Cardiac septum (tissue), 1 donor: ENCODE measurements at regions of chr1 and their contacts with region 1.

Region 1: DNA sequence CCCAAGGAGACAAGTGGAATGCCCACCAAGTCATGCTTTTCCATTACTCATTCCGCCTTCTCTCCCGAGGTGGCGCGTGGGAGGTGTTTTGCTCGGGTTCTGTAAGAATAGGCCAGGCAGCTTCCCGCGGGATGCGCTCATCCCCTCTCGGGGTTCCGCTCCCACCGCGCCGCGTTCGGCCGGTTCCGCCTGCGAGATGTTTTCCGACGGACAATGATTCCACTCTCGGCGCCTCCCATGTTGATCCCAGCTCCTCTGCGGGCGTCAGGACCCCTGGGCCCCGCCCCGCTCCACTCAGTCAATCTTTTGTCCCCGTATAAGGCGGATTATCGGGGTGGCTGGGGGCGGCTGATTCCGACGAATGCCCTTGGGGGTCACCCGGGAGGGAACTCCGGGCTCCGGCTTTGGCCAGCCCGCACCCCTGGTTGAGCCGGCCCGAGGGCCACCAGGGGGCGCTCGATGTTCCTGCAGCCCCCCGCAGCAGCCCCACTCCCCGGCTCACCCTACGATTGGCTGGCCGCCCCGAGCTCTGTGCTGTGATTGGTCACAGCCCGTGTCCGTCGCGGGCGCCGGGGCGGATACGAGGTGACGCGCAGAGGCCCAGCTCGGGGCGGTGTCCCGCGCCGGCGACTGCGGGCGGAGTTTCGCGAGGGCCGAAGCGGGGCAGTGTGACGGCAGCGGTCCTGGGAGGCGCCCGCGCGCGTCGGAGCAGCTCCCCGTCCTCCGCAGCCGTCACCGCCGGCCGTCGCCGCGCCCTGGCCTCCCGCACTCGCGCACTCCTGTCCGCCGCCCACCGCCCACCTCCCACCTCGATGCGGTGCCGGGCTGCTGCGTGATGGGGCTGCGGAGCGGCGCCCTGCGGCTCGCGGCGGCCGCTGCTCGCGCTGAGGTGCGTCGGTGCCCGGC is at the start of gene KIF1B:
- DNase-seq: peak; percentile 99
- total RNA-seq, gene KIF1B: 93.6 TPM

Region 2: GRCh38 chr1:9890224-9890731 is 319.9 kb before region 1 on chr1:
- intact Hi-C with region 1: no loop called
- DNase-seq: no peak

Region 3: DNA sequence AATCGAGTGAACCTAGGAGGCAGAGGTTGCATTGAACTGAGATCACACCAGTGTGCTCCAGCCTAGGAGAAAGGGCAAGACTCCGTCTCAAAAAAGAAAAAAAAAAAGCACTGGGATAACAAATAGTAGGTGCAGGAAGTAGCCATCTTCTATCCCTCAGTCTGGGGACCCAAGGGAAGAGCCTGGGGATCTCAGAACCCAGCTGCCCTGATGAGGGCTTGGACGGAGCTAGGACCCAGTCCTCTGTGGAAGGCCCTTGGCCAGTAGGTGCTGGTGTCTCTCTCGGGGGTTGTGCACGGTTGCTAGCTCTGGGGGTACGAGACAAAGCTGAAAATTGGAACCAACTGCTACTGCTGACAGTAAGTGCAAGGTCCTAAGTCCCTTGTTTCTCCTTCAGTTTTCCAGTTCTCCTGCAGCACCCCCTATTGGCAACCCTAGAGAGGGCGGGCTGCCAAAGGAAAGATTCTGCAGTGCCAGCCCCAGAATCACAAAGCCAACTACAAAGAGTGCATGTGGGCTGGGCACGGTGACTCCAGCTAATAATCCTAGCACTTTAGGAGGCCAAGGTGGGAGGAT is 57.4 kb before region 1 on chr1:
- intact Hi-C with region 1: loop called (anchors 5 kb)
- DNase-seq: no peak

Region 4: GRCh38 chr1:10195570-10195969 is 14.6 kb before region 1 on chr1:
- intact Hi-C with region 1: no loop called
- DNase-seq: no peak

Region 5: DNA sequence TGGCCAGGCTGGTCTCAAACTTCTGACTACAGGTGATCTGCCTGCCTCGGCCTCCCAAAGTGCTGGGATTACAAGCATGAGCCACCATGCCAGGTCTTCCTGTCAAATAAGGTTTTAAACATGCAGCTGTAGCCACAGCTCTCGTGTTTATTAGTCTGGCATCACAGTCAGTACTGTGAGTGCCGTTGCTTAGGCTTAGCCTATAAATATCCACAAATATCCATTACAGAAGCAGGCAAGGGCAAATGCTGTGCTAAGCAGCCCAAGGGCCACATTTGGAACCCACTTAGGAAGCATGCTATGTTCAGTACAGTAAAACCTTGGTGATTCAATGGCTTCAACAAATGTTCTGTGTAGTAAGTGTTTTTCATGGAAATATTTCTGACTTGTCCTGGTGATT is 76.1 kb after region 1 on chr1:
- intact Hi-C with region 1: loop called (anchors 2 kb)
- DNase-seq: no peak

Region 6: DNA sequence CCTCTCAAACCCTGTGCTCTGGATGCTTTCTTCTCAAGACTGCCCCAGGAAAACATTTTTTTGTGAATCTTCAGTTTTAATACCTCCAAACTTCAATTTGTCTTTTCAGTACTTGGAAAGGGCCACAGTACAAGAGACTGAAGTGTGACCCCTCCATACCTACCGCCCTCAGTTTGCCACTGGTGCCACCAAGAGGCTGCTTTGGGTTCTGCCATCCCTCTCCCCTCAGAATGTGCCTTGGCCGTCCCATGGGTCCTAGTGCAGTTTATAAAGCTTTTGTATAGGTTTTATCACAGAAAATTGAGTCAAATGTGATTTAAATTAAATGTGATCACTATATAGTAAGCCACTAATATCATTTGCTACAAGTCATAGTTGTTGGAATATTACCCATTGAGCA is 127.9 kb after region 1 on chr1:
- intact Hi-C with region 1: loop called (anchors 1 kb)
- DNase-seq: no peak

Region 7: DNA sequence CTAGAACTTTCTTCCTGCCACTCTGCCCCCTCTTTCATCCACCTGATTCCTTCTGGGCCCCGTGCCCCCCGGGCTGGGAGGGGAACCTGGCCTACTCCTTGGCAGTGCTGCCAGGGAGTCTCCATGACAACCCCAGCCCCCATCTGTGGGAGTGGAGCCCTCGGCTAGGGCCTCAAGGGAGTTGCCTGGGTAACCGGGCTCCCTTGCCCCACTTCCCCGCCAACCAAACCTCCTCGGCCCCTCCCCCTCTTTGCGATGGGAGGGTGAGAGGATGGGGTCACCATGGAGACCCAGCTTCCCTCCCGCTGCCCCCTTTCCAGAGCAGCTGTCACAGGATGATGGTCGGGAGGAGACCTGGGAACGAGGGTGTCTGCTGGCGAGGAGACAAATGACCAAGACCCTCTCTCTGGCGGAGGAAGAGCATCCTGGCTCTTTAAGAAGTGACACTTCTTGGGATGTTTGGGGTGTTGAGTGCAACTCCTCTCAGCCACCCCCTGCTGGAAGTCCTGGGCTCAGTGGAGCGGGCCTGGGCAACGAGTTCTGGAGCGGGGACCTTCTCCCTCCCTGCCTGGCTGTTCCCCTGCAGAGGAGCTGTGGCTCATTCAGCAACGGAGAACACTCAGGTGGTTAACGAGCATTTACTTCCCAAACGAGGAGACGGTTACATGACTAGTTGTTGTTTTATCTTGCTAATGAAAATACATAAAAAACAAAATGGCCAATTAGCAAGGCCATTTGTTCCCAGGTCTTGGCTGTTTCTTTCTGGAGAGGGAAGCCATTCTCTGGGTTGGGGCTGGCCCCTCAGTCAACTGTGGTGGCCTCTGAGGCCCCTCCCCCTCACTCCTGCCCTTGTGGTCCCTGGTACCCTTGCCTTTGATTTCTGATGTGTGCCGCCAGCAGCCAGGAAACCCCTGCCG is 1145.7 kb after region 1 on chr1:
- intact Hi-C with region 1: no loop called
- DNase-seq: no peak